Cardiac septum (tissue), 1 donor: ENCODE measurements at regions of chr3 and their contacts with region 1.

Region 1: DNA sequence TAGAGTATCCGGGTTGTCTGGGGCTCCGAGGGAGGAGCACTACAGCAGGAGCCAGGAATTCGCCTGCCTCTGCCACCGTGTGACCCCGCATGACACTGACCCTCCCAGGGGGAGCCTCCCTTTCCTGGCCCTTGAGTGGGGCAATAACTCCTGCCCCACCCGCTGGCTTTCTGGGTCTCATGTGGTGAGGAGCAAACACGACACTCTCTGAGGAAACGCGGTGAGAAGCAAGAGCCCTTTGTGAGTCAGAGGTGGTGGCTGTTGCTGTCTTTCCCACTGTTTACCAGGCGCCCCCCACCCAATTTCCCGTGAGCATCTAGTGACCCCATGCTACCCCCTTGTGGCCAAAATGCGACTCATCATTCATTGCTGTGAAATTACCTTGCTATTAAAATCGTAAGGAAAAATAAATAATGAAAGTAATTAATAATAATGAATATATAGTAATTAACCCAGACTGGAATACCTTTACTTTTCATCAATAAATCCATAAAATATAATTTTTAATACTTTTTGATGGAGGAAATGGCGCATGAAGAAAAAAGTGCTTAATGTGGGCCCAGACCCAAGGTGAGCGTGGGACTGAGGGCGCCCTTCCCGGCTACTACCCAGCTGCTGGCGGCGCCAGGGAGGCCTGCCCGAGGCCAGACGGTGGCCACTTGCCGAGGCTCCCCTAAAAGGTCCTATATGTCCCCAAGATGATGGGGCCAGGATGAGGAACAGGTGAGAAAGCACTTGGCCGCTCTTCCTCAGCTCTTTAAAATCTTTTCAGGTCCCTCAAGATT is 29.3 kb downstream of the CCNL1 start:
- DNase-seq: no peak

Region 2: GRCh38 chr3:156535162-156535627 is 595.5 kb before region 1 on chr3:
- intact Hi-C with region 1: loop called (anchors 10 kb)
- DNase-seq: no peak

Region 3: GRCh38 chr3:156826144-156826895 is 304.3 kb before region 1 on chr3 and contains the start of gene LEKR1:
- intact Hi-C with region 1: loop called (anchors 5 kb)
- DNase-seq: peak; percentile 91
- total RNA-seq, gene LEKR1: 0.32 TPM